Mammary epithelial cell (primary cell): ENCODE measurements at regions of chr3 and their contacts with region 1.

Region 1: GRCh38 chr3:136994772-136995516 is 37.2 kb downstream of the IL20RB start:
- DNase-seq: peak; percentile 98
- H3K4me3 ChIP-seq: no peak overlapping the region
- H3K27ac ChIP-seq: peak overlapping the region; percentile 91
- H3K4me1 ChIP-seq: peaks cover 55% of the 10 kb centered on the region
- H3K27me3 ChIP-seq: no peaks in the 10 kb centered on the region
- CTCF ChIP-seq: no peak

Region 2: DNA sequence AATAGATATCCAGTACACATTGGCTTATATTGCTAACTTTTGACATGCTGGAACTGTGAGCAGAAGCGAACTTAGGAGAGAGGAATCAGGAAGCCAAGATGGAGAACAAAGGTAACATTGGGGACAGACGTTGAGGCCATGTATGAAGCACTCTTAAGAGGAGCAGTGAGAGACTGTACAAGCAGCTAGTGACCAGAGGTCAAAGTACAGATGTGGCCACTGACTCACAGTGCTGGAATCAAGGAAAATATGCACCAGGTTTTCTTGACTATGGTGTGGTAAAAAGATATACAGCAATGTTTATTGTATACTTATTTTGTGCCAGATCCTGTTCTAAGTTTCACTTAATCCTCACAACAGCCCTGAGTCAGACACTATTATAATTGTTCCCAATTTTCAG is 39.1 kb before region 1 on chr3:
- CTCF ChIA-PET with region 1: no interaction called
- dilution Hi-C with region 1: loop called (anchors 5 kb)
- in situ Hi-C with region 1: no loop called
- intact Hi-C with region 1: loop called (anchors 5 kb)
- DNase-seq: peak; percentile 61
- H3K4me3 ChIP-seq: no peak overlapping the region
- H3K27ac ChIP-seq: peak overlapping the region; percentile 55
- H3K4me1 ChIP-seq: peaks cover 78% of the 10 kb centered on the region
- H3K27me3 ChIP-seq: no peaks in the 10 kb centered on the region
- CTCF ChIP-seq: no peak

Region 3: GRCh38 chr3:137572931-137573330 is 578.0 kb after region 1 on chr3:
- CTCF ChIA-PET with region 1: no interaction called
- dilution Hi-C with region 1: no loop called
- in situ Hi-C with region 1: no loop called
- intact Hi-C with region 1: no loop called
- DNase-seq: no peak
- H3K4me3 ChIP-seq: no peak overlapping the region
- H3K27ac ChIP-seq: no peak overlapping the region
- H3K4me1 ChIP-seq: no peaks in the 10 kb centered on the region
- H3K27me3 ChIP-seq: no peaks in the 10 kb centered on the region
- CTCF ChIP-seq: no peak

Region 4: GRCh38 chr3:138165061-138165460 is 1170.1 kb after region 1 on chr3:
- CTCF ChIA-PET with region 1: no interaction called
- dilution Hi-C with region 1: no loop called
- in situ Hi-C with region 1: no loop called
- intact Hi-C with region 1: no loop called
- DNase-seq: no peak
- H3K4me3 ChIP-seq: no peak overlapping the region
- H3K27ac ChIP-seq: no peak overlapping the region
- H3K4me1 ChIP-seq: no peaks in the 10 kb centered on the region
- H3K27me3 ChIP-seq: no peaks in the 10 kb centered on the region
- CTCF ChIP-seq: no peak